ENCODE measurements at regions of chr12 and their contacts with region 1.

Region 1: DNA sequence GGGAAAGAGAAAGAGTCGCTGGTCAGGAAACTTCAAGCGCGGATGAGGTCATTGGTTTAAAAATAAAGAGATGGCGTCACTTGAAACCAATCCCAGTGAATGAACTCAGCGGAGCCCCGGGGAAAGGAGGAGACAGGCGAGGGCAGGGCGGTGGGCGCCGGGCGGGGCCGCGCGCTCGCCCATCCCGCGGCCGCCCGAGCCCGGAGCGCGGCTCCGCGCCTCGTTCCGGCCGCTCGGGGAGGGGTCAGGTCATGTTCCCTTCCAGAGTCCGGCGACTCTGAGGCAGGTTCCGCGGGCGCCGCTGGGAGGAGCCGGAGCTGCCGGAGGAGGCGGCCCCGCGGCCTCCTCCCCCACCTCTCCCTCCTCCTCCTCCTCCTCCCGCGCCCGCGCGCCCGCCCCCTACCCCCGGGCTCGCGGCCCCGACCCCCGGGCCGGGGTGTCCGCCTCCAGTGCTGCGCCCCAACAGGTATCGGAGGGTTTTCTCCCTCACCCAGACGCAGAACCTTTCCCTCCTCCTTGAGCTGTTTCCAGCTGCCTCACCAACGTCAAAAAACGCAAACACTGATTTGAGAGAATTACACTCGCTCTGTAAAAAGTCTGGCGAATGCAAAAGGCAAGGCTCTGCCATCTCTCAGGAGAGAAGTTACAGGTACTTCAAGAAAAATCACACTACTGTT is at the start of gene DUSP16:
- DNase-seq: peak; percentile 91
- H3K4me3 ChIP-seq: peak within 1 kb of the TSS; percentile 74 to 87 (median 81)
- H3K27ac ChIP-seq: peak within 1 kb of the TSS; percentile 96
- H3K4me1 ChIP-seq: peaks cover 20% of the 10 kb centered on the region
- H3K27me3 ChIP-seq: no peaks in the 10 kb centered on the region
- CTCF ChIP-seq: peak in 1 of 2 donors; percentile 7
- total RNA-seq, gene DUSP16: 11.2 to 16.4 TPM

Region 2: DNA sequence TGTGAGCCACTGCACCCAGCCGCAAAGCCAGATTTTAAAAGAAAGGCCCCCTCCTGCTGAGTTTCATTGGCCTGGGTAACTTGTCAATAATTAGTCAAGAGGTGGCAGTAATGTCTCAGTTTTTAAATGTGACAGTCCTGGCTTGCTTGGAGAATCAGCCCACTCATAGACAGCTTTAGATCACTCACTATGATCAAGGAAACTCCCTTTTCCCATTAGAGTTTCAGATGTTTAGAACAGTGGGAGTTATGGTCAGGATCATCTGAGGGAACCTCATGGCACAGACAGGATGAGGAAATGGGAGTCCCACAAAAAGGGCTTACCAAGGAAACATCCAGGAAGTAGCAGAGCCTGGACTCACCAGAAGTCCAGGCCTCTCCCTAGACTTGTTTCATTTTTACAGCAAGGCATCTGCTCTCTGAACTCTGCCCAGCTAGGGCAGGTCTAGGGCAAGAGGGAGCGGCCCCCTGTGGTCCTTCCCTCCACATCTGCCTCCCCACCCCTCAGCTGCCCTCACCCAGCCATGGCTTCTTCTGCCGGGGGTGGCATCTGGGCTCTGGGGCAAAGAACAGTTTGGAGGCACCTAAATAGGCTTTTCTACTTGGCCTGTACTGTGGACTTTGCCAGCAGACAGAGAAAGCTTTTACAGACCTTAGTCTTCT is 480.8 kb before region 1 on chr12:
- CTCF ChIA-PET with region 1: no interaction called
- dilution Hi-C with region 1: no loop called
- in situ Hi-C with region 1: no loop called
- intact Hi-C with region 1: loop called (anchors 5 kb)
- DNase-seq: peak; percentile 48
- H3K4me3 ChIP-seq: no peak overlapping the region
- H3K27ac ChIP-seq: no peak overlapping the region
- H3K4me1 ChIP-seq: no peaks in the 10 kb centered on the region
- H3K27me3 ChIP-seq: no peaks in the 10 kb centered on the region
- CTCF ChIP-seq: peak; percentile 28 to 39

Region 3: DNA sequence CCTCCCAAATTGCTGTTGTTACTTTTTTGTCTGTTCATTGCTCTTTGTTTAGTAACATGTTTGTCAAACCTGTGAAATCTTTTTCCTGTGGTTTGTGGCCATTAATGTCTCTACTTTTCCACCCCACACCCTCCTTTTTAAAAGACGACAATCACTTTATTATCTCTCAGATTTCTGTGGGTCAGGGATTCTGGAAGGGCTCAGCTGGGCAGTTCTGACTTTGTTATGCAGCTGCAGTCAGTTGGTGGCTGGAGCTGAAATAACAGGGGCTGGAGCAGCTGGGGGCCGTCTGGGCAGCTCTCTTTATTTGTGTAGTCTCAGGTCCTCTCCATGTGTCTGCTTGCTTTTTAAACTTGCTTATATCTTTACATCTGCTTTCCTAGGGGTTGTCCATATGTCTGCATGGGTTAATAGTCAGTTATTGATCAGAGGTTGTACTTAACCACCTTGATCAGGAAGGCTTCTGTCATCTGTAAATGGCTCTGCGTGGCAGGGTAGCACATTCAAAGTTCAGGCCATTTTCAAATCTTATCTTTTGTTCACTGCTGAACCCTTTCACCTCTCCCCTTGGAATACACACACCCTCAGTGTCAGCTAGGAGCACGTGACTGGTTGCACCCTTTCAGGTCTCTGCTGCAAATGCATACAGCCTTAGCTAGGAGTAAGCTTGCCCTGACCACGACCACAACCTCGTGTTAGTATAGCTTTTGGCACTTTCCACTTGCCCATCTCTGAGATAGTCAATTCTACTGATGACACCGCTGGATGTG is 178.0 kb before region 1 on chr12:
- CTCF ChIA-PET with region 1: no interaction called
- dilution Hi-C with region 1: no loop called
- in situ Hi-C with region 1: loop called (anchors 25 kb)
- intact Hi-C with region 1: loop called (anchors 2 kb)
- DNase-seq: no peak
- H3K4me3 ChIP-seq: no peak overlapping the region
- H3K27ac ChIP-seq: no peak overlapping the region
- H3K4me1 ChIP-seq: peaks cover 9% of the 10 kb centered on the region
- H3K27me3 ChIP-seq: no peaks in the 10 kb centered on the region
- CTCF ChIP-seq: no peak

Region 4: GRCh38 chr12:12425616-12426015 is 137.1 kb before region 1 on chr12:
- CTCF ChIA-PET with region 1: no interaction called
- dilution Hi-C with region 1: no loop called
- in situ Hi-C with region 1: no loop called
- intact Hi-C with region 1: loop called (anchors 5 kb)
- DNase-seq: no peak
- H3K4me3 ChIP-seq: no peak overlapping the region
- H3K27ac ChIP-seq: no peak overlapping the region
- H3K4me1 ChIP-seq: peaks cover 22% of the 10 kb centered on the region
- H3K27me3 ChIP-seq: no peaks in the 10 kb centered on the region
- CTCF ChIP-seq: no peak

Region 5: DNA sequence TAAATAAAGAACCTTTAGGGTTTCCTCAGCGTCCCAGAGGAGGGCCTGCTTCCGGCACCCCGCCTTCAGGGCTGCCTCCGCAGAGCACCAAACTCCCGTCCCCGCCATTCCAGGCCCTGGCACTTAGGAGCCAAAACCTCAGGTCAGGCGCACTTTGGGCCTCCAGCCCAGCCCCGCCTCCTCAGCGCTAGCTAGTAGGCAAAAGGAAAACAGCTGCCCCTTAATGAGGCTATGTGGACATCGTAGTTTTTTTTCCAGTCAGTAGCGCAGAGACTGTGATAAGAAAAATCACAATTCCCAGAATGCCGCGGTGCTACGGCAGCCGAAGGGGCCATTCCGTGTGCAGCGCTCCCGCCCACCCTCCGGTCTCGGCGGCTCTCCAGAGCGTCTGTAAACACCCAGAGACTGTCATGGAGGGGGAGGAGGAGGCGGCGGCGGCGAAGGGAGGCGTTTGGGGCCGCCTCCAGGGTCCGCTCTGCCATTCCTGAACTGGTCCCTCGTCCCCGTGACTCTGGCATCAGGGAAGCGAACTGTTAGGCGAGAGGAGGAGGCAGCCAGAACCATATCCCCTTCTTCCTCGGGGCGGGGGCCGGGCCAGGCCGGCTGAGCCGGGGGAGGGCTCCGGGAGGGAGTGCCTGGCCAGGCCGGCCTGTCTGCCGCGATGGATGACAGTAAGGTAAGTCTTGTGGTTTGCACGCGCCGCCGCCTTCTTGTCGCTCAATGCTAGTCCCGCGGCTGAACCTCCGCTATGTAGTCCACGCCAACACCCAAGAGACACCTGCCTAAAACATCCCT is 49.0 kb after region 1 on chr12 and contains the start of gene CREBL2:
- CTCF ChIA-PET with region 1: interaction called, 8 read pairs
- dilution Hi-C with region 1: no loop called
- in situ Hi-C with region 1: no loop called
- intact Hi-C with region 1: loop called (anchors 1 kb)
- DNase-seq: peak; percentile 92
- H3K4me3 ChIP-seq: peak within 1 kb of the TSS; percentile 65 to 75 (median 75)
- H3K27ac ChIP-seq: peak within 1 kb of the TSS; percentile 76
- H3K4me1 ChIP-seq: peaks cover 23% of the 10 kb centered on the region
- H3K27me3 ChIP-seq: no peaks in the 10 kb centered on the region
- CTCF ChIP-seq: no peak
- total RNA-seq, gene CREBL2: 18.1 to 40.2 TPM

Measured in mammary epithelial cell (primary cell).